ENCODE measurements at regions of chr2 and their contacts with region 1.

Region 1: GRCh38 chr2:183868707-183869106 is 729.6 kb upstream of the ZNF804A start:
- DNase-seq: no peak
- H3K4me3 ChIP-seq: no peak overlapping the region
- H3K27ac ChIP-seq: no peak overlapping the region
- H3K4me1 ChIP-seq: no peaks in the 10 kb centered on the region
- H3K27me3 ChIP-seq: no peaks in the 10 kb centered on the region
- CTCF ChIP-seq: no peak
- EP300 ChIP-seq: no peak
- POLR2A ChIP-seq: no peak

Region 2: GRCh38 chr2:184971546-184972068 is 1102.9 kb after region 1 on chr2:
- in situ Hi-C with region 1: no loop called
- intact Hi-C with region 1: loop called (anchors 5 kb)
- DNase-seq: no peak
- H3K4me3 ChIP-seq: no peak overlapping the region
- H3K27ac ChIP-seq: no peak overlapping the region
- H3K4me1 ChIP-seq: no peaks in the 10 kb centered on the region
- H3K27me3 ChIP-seq: no peaks in the 10 kb centered on the region
- CTCF ChIP-seq: no peak
- EP300 ChIP-seq: no peak
- POLR2A ChIP-seq: no peak